Dendritic cell treated with granulocyte-macrophage colony-stimulating factor and Interleukin-4, amounts not matched to agents 40 ng/mL and 50 ng/mL, for 4 days (primary cell): ENCODE measurements at regions of chr12 and their contacts with region 1.

Region 1: DNA sequence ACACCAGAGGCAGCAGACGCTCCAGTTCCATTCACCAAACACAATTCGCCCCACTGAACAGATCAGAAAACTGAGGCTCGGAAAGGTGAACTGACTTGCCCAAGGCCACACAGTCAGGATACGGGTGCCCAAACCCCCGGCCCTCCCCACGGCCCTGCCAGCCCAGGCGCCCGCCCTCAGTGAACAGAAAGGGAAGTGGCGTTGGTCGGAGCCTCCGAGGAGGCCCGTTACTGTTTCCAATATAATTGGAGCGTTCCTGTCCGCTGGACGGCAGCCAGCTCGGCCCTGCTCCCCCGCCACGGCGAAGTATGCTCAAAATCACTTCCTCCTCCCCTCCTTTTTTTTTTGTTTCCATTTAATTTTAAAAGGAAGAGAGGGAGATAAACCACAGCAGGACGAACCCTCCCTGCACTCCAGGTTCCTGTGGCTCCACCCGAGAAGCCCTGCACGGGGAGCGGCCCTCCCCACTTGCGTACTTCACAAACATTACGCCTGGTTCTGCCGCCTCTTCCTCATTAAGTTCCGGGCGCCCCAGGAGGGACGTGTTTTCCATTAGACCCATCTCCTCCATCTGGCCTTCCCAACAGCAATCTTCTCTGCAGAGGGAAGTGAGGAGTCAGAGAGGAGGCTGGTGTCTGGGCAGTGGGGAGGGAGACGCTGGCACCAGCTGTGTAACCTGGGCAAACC is 61.1 kb downstream of the NCOR2 start:
- H3K4me3 Mint-ChIP-seq: peak overlapping the region; percentile 75
- H3K27ac Mint-ChIP-seq: peak overlapping the region; percentile 92
- H3K4me1 Mint-ChIP-seq: peaks cover 96% of the 10 kb centered on the region
- H3K27me3 Mint-ChIP-seq: no peaks in the 10 kb centered on the region

Region 2: DNA sequence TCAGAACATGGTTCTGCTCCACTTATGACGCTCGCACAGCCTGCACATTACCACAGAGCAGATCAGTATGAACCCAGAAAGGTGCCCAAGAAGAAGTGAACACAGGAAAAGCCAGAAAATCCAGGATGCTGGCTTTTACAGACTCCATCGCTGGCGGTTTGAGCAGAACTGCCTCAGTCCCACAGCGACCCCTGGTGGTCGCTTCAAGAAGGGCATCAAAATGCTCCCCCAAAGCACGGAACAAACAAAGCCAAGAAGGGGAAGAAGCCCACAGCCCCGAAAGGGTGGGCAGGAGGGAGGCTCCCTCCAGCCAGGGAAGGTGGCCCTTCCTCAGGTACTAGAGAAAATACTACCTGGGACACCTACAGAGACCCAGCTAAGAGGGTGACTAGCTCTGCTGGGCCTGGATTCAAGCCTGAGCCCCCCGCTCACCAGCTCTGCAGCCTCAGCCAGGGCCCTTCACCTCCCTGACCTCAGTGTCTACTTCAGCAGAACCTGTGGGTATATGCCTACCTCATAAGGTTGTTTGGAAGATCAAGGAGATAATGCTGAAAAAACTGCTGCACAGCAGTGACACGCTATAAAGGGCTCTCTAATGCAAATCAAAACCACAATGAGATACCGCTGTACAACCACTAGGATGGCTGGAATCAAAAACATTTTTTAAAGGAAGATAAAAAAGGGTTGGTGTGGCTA is 36.9 kb before region 1 on chr12:
- intact Hi-C with region 1: no loop called
- H3K4me3 Mint-ChIP-seq: no peak overlapping the region
- H3K27ac Mint-ChIP-seq: no peak overlapping the region
- H3K4me1 Mint-ChIP-seq: peaks cover 44% of the 10 kb centered on the region
- H3K27me3 Mint-ChIP-seq: no peaks in the 10 kb centered on the region

Region 3: DNA sequence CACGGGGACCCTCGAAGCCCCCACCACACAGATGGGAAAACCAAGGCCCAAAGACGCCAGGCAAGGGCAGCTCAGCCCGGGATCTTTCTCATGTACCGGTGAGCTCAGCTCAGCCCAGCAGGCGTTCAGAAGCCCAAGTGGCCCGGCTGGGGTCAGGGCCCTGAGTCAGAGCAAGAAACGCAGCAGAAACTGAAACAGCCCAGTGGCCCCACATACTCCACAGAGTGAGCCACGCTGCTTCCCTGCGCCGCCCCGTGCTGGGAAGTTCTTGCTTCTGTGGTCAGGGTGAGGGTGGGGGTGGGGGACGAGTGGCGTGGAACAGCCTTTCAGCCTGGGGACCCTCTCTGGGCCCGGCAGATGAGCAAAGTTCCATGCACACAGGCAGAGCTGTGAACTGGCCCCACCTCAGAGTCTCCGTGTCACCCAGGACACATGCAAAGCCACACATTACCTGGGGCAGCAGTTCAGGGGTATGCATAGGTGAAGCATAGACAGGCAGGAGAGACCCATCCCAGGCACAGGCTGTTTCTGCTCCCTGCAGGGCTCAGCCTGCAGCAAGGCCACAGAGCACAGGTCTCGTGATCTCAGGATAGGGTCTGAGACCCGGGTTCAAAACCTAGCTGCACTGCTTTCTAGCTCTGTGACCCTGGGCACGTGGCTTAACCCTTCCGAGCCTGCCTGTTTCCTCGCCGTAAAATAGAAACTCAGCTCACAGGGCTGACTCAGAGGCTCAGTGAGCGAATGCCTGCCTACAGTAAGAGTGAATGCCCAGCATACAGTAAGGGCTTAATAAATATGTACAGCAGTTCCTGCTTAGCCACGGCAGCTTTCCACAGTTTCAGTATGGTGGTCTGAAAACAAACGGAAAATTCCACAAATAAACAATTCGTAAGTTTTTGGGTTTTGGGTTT is 39.5 kb after region 1 on chr12:
- intact Hi-C with region 1: loop called (anchors 5 kb)
- H3K4me3 Mint-ChIP-seq: peak overlapping the region; percentile 66
- H3K27ac Mint-ChIP-seq: peak overlapping the region; percentile 98
- H3K4me1 Mint-ChIP-seq: peaks cover 90% of the 10 kb centered on the region
- H3K27me3 Mint-ChIP-seq: no peaks in the 10 kb centered on the region

Region 4: DNA sequence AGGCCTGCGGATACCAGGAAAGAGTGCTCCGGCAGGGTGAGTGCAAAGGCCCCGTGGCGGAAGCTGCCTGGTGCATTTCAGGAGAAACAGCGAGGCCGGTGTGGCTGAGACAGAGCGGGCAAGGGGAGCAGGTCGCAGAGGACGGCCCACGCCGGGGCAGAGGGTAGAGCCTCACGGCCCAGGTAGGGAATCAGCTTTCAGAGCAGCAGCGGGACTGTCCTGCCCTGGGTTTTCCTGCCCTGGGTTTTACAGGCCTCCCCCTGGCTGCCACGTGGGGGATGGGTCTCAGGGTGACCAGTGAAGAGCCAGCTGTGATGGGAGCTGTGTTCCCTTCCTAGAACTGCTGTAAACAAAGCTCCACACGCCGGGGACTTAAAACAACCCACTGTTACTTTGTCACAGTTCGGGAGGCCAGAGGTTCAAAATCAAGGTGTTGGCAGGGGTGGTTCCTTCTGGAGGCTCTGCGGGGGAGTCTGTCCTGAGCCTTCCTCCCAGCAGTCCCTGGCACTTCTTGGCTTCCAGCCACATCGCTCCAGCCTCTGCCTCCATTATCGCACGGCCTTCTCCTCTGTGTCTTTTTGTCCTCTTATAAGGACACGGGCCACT is 50.7 kb after region 1 on chr12:
- intact Hi-C with region 1: no loop called
- H3K4me3 Mint-ChIP-seq: no peak overlapping the region
- H3K27ac Mint-ChIP-seq: peak overlapping the region; percentile 64
- H3K4me1 Mint-ChIP-seq: peaks cover 97% of the 10 kb centered on the region
- H3K27me3 Mint-ChIP-seq: no peaks in the 10 kb centered on the region